Natural killer cell (primary cell): ENCODE measurements at regions of chr17 and their contacts with region 1.

Region 1: GRCh38 chr17:63946440-63947367 is 14.6 kb upstream of the CD79B start:
- DNase-seq: peak; percentile 47 to 83
- ATAC-seq: peak; percentile 69 to 90 (median 83)
- H3K4me3 ChIP-seq: peak overlapping the region; percentile 26
- H3K4me3 Mint-ChIP-seq: peak overlapping the region; percentile 78
- H3K27ac ChIP-seq: peak overlapping the region; percentile 68
- H3K27ac Mint-ChIP-seq: peak overlapping the region; percentile 14 to 81
- H3K4me1 ChIP-seq: peaks cover 41% of the 10 kb centered on the region
- H3K4me1 Mint-ChIP-seq: peaks cover 13 to 24% of the 10 kb centered on the region in 2 donors
- H3K27me3 ChIP-seq: no peaks in the 10 kb centered on the region
- H3K27me3 Mint-ChIP-seq: no peaks in the 10 kb centered on the region
- CTCF ChIP-seq: peak; percentile 80

Region 2: DNA sequence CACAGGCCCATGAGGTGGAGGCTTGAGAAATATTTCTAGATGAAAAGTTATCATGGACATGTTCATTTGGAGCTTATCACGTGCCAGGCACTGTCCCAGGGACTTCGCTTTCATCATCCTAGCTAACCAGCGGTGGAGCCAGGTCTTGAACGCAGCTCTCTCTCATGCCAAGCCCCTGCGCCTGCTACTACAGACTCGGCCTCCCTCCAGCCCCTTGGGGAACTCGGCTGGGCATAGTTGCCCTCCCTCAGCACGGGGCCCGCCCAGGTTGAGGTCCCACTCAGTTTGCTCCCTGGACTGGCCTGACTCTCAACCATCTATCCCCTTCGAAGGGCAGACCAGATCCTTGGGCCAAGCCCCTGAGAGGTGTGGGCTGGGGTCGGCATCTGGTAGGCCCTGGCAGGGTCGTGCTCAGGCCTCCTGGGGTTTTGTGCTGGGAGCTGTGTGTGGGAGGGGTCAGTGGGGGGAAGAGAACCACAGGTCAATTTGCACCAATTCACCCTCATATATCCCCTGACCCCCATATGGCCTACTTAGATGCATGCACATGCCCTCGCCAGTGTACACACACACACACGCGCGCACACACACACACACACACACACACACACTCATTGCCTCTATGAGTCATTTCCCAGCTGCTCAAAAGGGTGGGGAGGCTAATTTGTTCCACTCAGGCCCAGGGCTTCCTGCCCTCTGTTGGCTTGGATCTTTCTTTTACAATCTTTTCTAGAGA is 38.1 kb after region 1 on chr17:
- intact Hi-C with region 1: loop called (anchors 5 kb)
- DNase-seq: peak; percentile 58 to 80
- ATAC-seq: peak; percentile 91 to 98 (median 98)
- H3K4me3 ChIP-seq: no peak overlapping the region
- H3K4me3 Mint-ChIP-seq: peak overlapping the region; percentile 62
- H3K27ac ChIP-seq: peak overlapping the region; percentile 32
- H3K27ac Mint-ChIP-seq: peak overlapping the region; percentile 67 to 86
- H3K4me1 ChIP-seq: peaks cover 32% of the 10 kb centered on the region
- H3K4me1 Mint-ChIP-seq: peaks cover 14 to 30% of the 10 kb centered on the region in 2 donors
- H3K27me3 ChIP-seq: no peaks in the 10 kb centered on the region
- H3K27me3 Mint-ChIP-seq: no peaks in the 10 kb centered on the region
- CTCF ChIP-seq: no peak